ENCODE measurements at regions of chr10 and their contacts with region 1.

Region 1: GRCh38 chr10:60816628-60817397 is 38.5 kb downstream of the CDK1 start:
- DNase-seq: peak; percentile 90
- ATAC-seq: peak; percentile 91
- H3K4me3 ChIP-seq: no peak overlapping the region
- H3K27ac ChIP-seq: no peak overlapping the region
- H3K4me1 ChIP-seq: peaks cover 13% of the 10 kb centered on the region
- H3K27me3 ChIP-seq: no peaks in the 10 kb centered on the region
- CTCF ChIP-seq: peak; percentile 91
- POLR2A ChIP-seq: peak; percentile 44; the same call in 1 of the 2 replicates
- RAD21 ChIP-seq: peak; percentile 94

Region 2: GRCh38 chr10:60944159-60944909 is 127.5 kb after region 1 on chr10 and contains the start of gene RHOBTB1:
- CTCF ChIA-PET with region 1: interaction called, 3 read pairs
- POLR2A ChIA-PET with region 1: interaction called, 5 read pairs
- dilution Hi-C with region 1: no loop called
- in situ Hi-C with region 1: no loop called
- intact Hi-C with region 1: loop called (anchors 5 kb)
- DNase-seq: peak; percentile 83
- ATAC-seq: peak; percentile 84
- H3K4me3 ChIP-seq: peak within 1 kb of the TSS; percentile 67
- H3K27ac ChIP-seq: peak within 1 kb of the TSS; percentile 92
- H3K4me1 ChIP-seq: peaks cover 2% of the 10 kb centered on the region; the same call in 1 of the 2 replicates
- H3K27me3 ChIP-seq: no peaks in the 10 kb centered on the region
- CTCF ChIP-seq: no peak
- POLR2A ChIP-seq: peak; percentile 90
- RAD21 ChIP-seq: no peak
- total RNA-seq, gene RHOBTB1: 15.2 and 18.9 TPM in 2 replicates

Region 3: DNA sequence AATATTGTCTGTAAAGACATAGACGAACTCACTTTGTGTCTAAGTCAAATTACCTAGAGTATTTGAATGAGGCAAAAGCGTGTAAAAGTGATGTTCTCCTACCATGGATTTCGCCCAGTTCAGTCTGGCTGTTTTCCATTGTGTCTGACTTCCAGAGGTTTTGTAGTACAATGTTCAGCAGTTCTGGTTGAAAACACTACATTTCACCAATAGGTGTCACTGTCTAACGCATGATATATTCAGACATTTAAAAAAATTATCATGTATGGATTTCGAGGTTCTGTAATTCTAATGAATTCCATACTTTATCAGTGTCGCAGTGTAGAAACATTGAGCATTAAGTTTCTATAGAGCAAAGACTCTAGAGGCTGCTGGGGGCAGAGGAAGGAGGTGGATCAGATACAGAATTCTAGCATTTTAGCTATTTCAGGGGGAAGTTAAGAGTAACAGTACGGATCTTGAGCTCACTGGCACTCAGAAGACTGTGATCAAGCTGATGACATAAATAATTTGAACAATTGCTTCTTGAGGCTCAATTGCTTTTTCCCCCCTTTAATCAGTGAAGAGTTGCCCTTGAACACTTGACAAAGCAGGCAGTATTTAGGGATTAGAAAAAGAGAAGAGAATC is 324.1 kb after region 1 on chr10:
- CTCF ChIA-PET with region 1: no interaction called
- POLR2A ChIA-PET with region 1: no interaction called
- dilution Hi-C with region 1: no loop called
- in situ Hi-C with region 1: no loop called
- intact Hi-C with region 1: loop called (anchors 2 kb)
- DNase-seq: peak; percentile 77
- ATAC-seq: peak; percentile 84
- H3K4me3 ChIP-seq: no peak overlapping the region
- H3K27ac ChIP-seq: no peak overlapping the region
- H3K4me1 ChIP-seq: peaks cover 15% of the 10 kb centered on the region
- H3K27me3 ChIP-seq: 0 out of 2 replicates have a peak, but pooled peaks cover 1% of the 10 kb centered on the region
- CTCF ChIP-seq: peak; percentile 68
- POLR2A ChIP-seq: no peak
- RAD21 ChIP-seq: peak; percentile 66

Region 4: DNA sequence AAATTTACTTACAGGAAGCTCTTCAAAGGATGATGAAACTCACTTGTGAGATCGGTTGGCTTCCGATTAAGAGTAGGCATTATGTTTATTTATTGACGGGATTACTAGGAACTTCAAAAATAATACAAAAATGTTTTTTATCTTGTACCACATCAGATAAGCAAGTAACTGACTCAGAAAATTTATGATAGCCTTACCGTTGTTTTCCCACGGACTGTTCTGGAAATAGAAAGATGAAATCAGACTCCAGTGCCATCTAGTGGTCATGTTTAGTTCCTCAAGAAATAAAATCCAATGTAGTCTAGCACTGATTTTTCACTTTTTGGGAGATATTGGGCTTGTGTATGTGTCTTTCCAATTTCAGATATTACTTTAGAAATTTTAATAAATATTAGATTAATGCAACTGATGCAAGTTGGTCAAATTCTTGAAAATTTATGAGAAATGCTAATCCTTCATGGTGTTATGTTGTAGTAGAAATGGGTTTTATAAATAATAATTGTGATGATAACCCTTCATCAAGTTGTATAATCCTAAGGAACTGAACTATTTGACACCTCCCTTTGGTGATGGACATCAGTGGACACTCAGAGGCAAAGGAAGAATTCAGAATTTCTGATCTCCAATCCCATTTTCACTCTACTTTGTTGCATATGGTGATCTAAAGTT is 467.5 kb after region 1 on chr10:
- CTCF ChIA-PET with region 1: no interaction called
- POLR2A ChIA-PET with region 1: no interaction called
- dilution Hi-C with region 1: no loop called
- in situ Hi-C with region 1: loop called (anchors 10 kb)
- intact Hi-C with region 1: loop called (anchors 1 kb)
- DNase-seq: peak; percentile 77
- ATAC-seq: peak; percentile 62
- H3K4me3 ChIP-seq: no peak overlapping the region
- H3K27ac ChIP-seq: no peak overlapping the region
- H3K4me1 ChIP-seq: no peaks in the 10 kb centered on the region
- H3K27me3 ChIP-seq: no peaks in the 10 kb centered on the region
- CTCF ChIP-seq: peak; percentile 78
- POLR2A ChIP-seq: no peak
- RAD21 ChIP-seq: peak; percentile 72

Region 5: DNA sequence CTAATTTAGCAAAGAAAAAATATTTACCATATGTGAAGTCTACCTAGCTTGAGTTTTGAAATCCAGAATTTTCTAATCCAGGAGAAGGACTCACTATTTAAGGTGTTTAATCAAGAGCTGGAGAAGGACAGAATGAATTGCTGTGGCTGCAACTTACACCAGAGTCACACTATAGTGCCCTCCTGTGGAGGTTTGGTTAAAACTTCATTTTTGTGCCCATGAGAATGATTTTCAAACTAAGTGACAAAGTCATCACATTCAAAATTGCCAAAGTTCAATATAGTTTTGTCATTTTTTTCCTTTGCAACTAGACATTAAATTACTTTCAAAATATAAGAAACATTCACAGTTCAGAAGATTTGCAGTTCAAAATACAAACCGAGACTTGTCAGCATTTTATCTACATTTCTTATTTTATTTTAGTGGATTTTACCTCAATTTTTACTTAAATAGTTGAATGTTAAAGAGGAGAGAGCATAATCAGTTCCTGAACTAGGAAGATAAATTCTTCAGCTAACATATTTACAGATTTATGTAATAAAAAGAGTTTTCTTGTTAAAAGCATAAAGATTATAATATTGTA is 916.6 kb after region 1 on chr10:
- CTCF ChIA-PET with region 1: no interaction called
- POLR2A ChIA-PET with region 1: no interaction called
- dilution Hi-C with region 1: no loop called
- in situ Hi-C with region 1: loop called (anchors 10 kb)
- intact Hi-C with region 1: loop called (anchors 1 kb)
- DNase-seq: peak; percentile 64
- ATAC-seq: peak; percentile 54; the same call in 1 of the 2 replicates
- H3K4me3 ChIP-seq: no peak overlapping the region
- H3K27ac ChIP-seq: no peak overlapping the region
- H3K4me1 ChIP-seq: no peaks in the 10 kb centered on the region
- H3K27me3 ChIP-seq: no peaks in the 10 kb centered on the region
- CTCF ChIP-seq: peak; percentile 72
- POLR2A ChIP-seq: 0 out of 2 replicates have a peak, but pooled peaks have one; percentile 22
- RAD21 ChIP-seq: peak; percentile 79

Region 6: GRCh38 chr10:62038609-62039190 is 1221.9 kb after region 1 on chr10:
- CTCF ChIA-PET with region 1: interaction called, 4 read pairs
- POLR2A ChIA-PET with region 1: no interaction called
- dilution Hi-C with region 1: no loop called
- in situ Hi-C with region 1: loop called (anchors 25 kb)
- intact Hi-C with region 1: no loop called
- DNase-seq: peak; percentile 78
- ATAC-seq: peak; percentile 33
- H3K4me3 ChIP-seq: no peak overlapping the region; the same call in 1 of the 2 replicates
- H3K27ac ChIP-seq: peak overlapping the region; percentile 96
- H3K4me1 ChIP-seq: peaks cover 28% of the 10 kb centered on the region
- H3K27me3 ChIP-seq: no peaks in the 10 kb centered on the region
- CTCF ChIP-seq: peak; percentile 84
- POLR2A ChIP-seq: 0 out of 2 replicates have a peak, but pooled peaks have one; percentile 23
- RAD21 ChIP-seq: peak; percentile 90